BJ (cell line): ENCODE measurements at regions of chr11 and their contacts with region 1.

Region 1: GRCh38 chr11:62400760-62401159 is 18.1 kb upstream of the SCGB1A1 start:
- DNase-seq: peak; percentile 71
- H3K4me3 ChIP-seq: no peak overlapping the region
- H3K27me3 ChIP-seq: no peaks in the 10 kb centered on the region
- CTCF ChIP-seq: no peak

Region 2: GRCh38 chr11:62186195-62186594 is 214.6 kb before region 1 on chr11:
- CTCF ChIA-PET with region 1: no interaction called
- POLR2A ChIA-PET with region 1: no interaction called
- DNase-seq: no peak
- H3K4me3 ChIP-seq: no peak overlapping the region
- H3K27me3 ChIP-seq: peaks cover 5% of the 10 kb centered on the region
- CTCF ChIP-seq: no peak

Region 3: DNA sequence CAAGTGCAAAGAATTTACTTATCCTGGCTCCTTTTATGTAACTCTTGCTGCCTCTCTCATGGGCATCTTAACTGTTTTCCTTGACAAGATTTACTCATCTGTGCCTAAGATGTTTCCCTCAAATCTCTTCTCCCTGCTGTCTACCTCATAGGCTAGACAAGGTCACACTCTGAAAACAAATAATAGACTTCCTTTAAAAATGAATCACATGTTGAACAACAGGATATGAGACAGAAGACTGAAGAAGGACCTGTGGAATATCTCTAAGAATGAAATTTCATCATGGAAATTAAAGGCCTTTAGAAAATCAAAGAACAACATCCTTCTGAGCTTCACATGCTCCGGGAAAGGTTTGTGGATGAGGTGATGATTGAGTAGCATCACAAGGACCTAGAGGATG is 136.8 kb before region 1 on chr11:
- CTCF ChIA-PET with region 1: no interaction called
- POLR2A ChIA-PET with region 1: no interaction called
- DNase-seq: no peak
- H3K4me3 ChIP-seq: no peak overlapping the region
- H3K27me3 ChIP-seq: no peaks in the 10 kb centered on the region; the same call in 1 of the 2 replicates
- CTCF ChIP-seq: no peak

Region 4: GRCh38 chr11:62421996-62422395 is 21.2 kb after region 1 on chr11:
- CTCF ChIA-PET with region 1: interaction called, 44 read pairs
- POLR2A ChIA-PET with region 1: no interaction called
- DNase-seq: no peak
- H3K4me3 ChIP-seq: no peak overlapping the region
- H3K27me3 ChIP-seq: no peaks in the 10 kb centered on the region; the same call in 1 of the 2 replicates
- CTCF ChIP-seq: no peak